Posterior vena cava (tissue), 2 donors: ENCODE measurements at regions of chr7 and their contacts with region 1.

Region 1: GRCh38 chr7:45990276-45990675 is 69.2 kb upstream of the IGFBP3 start:
- DNase-seq: no peak

Region 2: GRCh38 chr7:46115410-46115809 is 125.1 kb after region 1 on chr7:
- intact Hi-C with region 1: loop called in 1 of 2 experiments (anchors 5 kb)
- DNase-seq: no peak